Head of caudate nucleus (tissue), 42 donors: ENCODE measurements at regions of chr9 and their contacts with region 1.

Region 1: GRCh38 chr9:36328798-36329411 is 70.7 kb upstream of the GNE start:
- DNase-seq: peak in 23 of 42 donors; percentile 32 to 89 (median 64)

Region 2: GRCh38 chr9:36036780-36037548 is 291.9 kb before region 1 on chr9 and contains the start of gene RECK:
- intact Hi-C with region 1: loop called (anchors 10 kb)
- DNase-seq: peak; percentile 86 to 97 (median 93)

Region 3: GRCh38 chr9:36102742-36103495 is 226.0 kb before region 1 on chr9:
- intact Hi-C with region 1: no loop called
- DNase-seq: peak; percentile 67 to 94 (median 88)

Region 4: DNA sequence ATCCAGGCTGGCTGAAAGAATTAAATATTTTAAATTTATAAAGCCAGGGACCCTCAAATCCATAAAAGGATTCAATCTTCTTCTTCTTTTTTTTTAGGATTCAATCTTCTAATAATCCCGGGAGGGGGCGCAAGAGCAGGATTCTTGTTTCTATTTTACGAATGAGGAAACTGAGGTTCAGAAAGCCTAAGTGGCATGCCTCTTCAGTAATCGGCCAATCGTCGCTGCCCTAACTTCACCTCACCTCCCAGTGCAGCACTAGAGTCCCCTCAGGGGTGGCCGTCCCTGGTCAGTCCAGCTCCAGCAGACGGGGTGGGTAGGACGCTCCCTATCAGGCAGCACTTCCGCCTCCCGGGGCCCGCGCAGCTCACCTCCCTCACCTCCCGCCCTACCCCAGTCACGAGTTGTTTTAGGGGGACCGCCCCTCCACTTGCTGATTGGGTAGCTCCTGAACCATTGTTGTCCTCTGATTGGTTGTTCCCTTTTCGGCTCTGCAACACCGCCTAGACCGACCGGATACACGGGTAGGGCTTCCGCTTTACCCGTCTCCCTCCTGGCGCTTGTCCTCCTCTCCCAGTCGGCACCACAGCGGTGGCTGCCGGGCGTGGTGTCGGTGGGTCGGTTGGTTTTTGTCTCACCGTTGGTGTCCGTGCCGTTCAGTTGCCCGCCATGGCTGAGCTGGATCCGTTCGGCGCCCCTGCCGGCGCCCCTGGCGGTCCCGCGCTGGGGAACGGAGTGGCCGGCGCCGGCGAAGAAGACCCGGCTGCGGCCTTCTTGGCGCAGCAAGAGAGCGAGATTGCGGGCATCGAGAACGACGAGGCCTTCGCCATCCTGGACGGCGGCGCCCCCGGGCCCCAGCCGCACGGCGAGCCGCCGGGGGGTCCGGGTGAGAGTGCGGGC is 138.3 kb before region 1 on chr9 and contains the start of gene CLTA:
- intact Hi-C with region 1: loop called (anchors 2 kb)
- DNase-seq: peak; percentile 95 to 100 (median 98)

Region 5: GRCh38 chr9:36245906-36246305 is 83.0 kb before region 1 on chr9:
- intact Hi-C with region 1: loop called (anchors 5 kb)
- DNase-seq: no peak